GM12878 (cell line): ENCODE measurements at regions of chr14 and their contacts with region 1.

Region 1: DNA sequence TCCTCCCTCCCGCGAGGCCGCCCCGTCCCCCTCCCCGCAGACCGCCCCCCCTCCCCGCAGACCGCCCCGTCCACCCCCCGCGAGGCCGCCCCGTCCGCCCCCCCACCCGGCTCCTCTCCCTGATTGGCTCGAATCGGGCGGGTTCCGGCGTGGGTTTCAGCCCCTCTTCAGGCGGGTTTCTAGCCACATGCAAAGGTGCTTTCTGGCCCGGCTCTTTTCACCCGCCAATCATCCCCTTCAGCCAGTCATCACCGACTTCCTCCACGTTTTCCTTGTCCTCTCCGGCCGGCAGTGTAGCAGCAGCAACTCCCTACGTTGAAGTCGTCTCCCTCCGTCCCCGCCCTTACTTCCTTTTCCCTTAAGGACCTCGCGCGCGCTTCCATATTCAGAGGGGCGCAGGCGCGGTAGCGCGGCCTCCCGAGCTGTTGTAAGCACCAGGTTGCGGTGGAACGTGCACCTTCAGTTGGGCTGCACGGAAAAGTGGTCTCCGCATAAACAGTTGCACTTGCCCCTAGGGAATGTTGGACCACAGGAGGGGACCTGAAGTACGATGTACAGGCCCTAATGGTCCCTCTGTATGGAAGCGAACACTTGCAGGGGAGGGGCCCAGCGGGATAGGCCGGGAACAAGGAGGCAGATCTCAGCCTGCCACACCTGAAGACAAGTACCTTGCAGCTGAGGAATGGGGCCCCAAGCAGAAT is 44.6 kb upstream of the ESR2 start:
- DNase-seq: peak; percentile 96
- ATAC-seq: peak; percentile 91
- H3K4me3 ChIP-seq: peak overlapping the region; percentile 90
- H3K27ac ChIP-seq: peak overlapping the region; percentile 80
- H3K4me1 ChIP-seq: peaks cover 11% of the 10 kb centered on the region
- H3K27me3 ChIP-seq: no peaks in the 10 kb centered on the region
- CTCF ChIP-seq: no peak
- EP300 ChIP-seq: no peak
- POLR2A ChIP-seq: peak; percentile 78
- RAD21 ChIP-seq: no peak

Region 2: DNA sequence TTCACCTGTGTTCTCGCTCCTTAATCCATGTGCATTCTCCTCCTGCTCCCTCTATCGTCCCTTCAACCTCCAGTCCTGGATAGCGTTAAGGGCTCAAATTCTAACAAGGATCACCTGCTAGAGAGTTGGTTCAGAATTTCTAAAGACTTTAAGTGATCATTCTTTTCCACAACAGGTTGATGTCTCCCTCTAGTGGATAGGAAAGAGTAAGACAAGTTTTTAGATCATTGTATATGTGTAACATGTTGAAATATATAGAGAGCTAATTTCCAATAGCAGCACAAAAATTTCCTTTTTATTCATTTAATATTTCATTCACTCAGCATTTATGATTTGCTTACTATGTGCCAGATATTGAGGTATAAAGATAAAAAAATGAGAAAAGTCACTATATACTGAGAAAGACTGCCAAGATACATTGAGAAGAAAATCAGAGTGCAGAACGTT is 35.3 kb before region 1 on chr14:
- CTCF ChIA-PET with region 1: interaction called, 11 read pairs
- POLR2A ChIA-PET with region 1: no interaction called
- RAD21 ChIA-PET with region 1: interaction called, 7 read pairs
- SMC1A ChIA-PET with region 1: interaction called, 10 read pairs
- in situ Hi-C with region 1: no loop called
- intact Hi-C with region 1: no loop called
- DNase-seq: peak; percentile 28
- ATAC-seq: peak; percentile 93
- H3K4me3 ChIP-seq: no peak overlapping the region
- H3K27ac ChIP-seq: no peak overlapping the region
- H3K4me1 ChIP-seq: no peaks in the 10 kb centered on the region
- H3K27me3 ChIP-seq: no peaks in the 10 kb centered on the region
- CTCF ChIP-seq: peak; percentile 66 to 72 (median 67)
- EP300 ChIP-seq: no peak
- POLR2A ChIP-seq: no peak
- RAD21 ChIP-seq: peak; percentile 88

Region 3: DNA sequence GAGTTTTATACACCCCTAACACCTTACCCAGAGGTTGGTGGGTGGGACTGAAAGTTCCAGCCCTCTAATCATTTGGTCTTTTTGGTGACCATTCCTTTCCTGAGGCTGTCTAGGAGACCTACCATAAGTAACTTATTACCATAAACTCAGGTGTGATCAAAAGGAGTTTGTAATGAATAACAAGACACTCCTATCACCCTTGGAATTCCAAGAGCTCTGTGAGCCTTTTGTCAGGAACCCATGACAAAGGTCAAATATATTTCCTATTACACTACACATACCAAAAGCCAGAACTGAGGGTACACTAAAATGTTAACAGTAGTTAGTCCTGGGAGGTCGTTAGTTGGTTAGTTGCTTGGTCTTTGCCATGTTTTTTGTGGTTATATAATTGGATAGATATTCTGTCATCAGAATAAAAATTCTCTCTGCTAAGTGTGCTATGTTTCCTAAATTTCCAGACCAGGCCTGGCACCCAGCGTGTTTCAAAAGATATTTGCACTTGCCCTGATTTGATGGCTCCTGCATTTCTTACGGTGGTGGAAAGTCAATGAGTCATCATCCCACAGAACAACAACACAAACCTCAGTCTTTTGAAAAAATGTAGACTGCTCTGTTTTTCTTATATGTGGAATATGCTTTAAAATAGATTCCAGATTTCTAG is 99.5 kb after region 1 on chr14:
- CTCF ChIA-PET with region 1: interaction called, 66 read pairs
- POLR2A ChIA-PET with region 1: no interaction called
- RAD21 ChIA-PET with region 1: interaction called, 5 read pairs
- SMC1A ChIA-PET with region 1: interaction called, 6 read pairs
- in situ Hi-C with region 1: no loop called
- intact Hi-C with region 1: no loop called
- DNase-seq: no peak
- ATAC-seq: no peak
- H3K4me3 ChIP-seq: no peak overlapping the region
- H3K27ac ChIP-seq: no peak overlapping the region
- H3K4me1 ChIP-seq: no peaks in the 10 kb centered on the region
- H3K27me3 ChIP-seq: no peaks in the 10 kb centered on the region
- CTCF ChIP-seq: no peak
- EP300 ChIP-seq: no peak
- POLR2A ChIP-seq: no peak
- RAD21 ChIP-seq: no peak

Region 4: DNA sequence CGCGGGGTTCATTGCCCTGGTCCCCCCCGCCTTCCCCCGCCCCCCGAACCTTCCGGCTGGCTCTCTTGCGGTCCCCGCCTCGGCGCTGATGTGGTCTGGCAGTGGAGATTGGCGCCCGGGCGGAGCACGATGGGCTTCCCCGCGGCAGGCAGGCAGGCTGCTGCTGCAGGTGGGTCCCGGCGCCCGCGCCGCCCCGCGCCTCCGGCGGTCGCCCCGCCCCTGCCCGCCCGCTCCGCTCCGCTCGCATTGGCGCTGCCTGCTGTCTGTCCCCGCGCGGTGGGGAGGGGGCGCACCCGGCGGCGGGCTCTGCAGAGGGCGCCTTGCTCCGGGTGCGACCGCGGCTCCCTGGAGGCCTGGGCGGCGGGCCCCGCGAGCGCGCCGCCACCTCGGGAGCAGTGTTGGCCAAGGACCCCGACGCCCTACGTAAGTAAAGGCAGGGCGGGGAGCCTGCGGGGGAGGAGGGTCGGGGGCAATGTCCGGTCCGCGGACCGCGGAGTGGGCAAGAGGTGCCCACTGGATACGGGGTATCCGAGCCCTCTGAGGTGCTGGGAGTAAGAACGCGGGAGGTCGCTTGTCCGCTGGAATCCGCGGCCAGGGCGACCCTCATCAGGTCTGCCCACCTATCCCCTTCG is 126.5 kb after region 1 on chr14 and contains the start of gene AKAP5:
- CTCF ChIA-PET with region 1: interaction called, 25 read pairs
- POLR2A ChIA-PET with region 1: interaction called, 6 read pairs
- RAD21 ChIA-PET with region 1: interaction called, 7 read pairs
- SMC1A ChIA-PET with region 1: interaction called, 19 read pairs
- in situ Hi-C with region 1: no loop called
- intact Hi-C with region 1: no loop called
- DNase-seq: no peak
- ATAC-seq: peak; percentile 89
- H3K4me3 ChIP-seq: peak within 1 kb of the TSS; percentile 79
- H3K27ac ChIP-seq: peak within 1 kb of the TSS; percentile 29; the same call in 1 of the 2 replicates
- H3K4me1 ChIP-seq: peaks cover 33% of the 10 kb centered on the region
- H3K27me3 ChIP-seq: no peaks in the 10 kb centered on the region
- CTCF ChIP-seq: 0 out of 6 replicates have a peak, but pooled peaks of 1 of the 3 experiments have one; percentile 4
- EP300 ChIP-seq: no peak
- POLR2A ChIP-seq: peak; percentile 75
- RAD21 ChIP-seq: no peak
- polyA plus RNA-seq, gene AKAP5: 0.45 to 1.5 TPM

Region 5: DNA sequence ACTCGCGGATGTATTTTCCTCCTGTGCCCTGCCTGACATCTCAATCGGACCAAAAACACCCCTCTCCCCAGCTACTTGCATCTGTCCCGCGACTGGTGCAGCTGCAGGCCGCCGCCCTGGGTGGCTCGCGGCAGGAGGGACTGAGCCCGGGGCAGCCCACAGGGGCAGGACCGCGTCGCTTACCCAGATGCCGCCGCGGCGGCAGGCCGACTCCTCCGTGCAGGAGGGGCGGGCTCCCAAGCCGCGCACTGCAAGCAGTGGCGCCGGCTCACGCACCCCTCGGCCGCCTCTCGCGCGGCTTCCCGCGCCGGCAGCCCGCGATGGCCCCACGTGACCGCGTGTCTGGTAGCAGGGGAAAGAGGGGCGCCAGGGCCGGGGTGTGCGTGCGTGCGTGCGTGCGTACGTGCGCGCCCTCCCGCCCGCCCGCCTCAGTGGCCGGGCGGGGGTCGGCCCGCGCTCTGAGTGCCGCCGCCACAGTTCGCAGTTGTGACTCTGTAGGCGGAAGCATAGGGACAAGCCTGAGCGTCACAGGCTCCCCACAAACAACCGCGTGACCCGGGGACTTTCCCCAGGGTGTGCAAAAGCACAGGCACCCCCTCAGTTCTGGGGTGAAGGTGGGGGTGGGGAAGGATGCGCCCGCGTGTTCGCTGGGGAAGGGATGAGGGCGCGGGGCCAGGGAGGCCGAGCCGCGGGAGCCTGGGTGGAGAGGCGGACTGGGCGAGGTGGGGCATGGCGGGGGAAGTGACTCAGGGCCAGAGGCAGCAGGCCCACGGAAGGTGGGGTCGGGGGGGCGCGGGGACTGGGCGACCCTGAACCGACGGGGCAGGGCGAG is 164.9 kb after region 1 on chr14 and contains the start of gene ZBTB25:
- CTCF ChIA-PET with region 1: interaction called, 45 read pairs
- POLR2A ChIA-PET with region 1: interaction called, 6 read pairs
- RAD21 ChIA-PET with region 1: interaction called, 4 read pairs
- SMC1A ChIA-PET with region 1: interaction called, 31 read pairs
- in situ Hi-C with region 1: no loop called
- intact Hi-C with region 1: loop called (anchors 5 kb)
- DNase-seq: peak; percentile 83
- ATAC-seq: peak; percentile 71
- H3K4me3 ChIP-seq: peak within 1 kb of the TSS; percentile 91
- H3K27ac ChIP-seq: peak within 1 kb of the TSS; percentile 98
- H3K4me1 ChIP-seq: peaks cover 6% of the 10 kb centered on the region
- H3K27me3 ChIP-seq: no peaks in the 10 kb centered on the region
- CTCF ChIP-seq: no peak
- EP300 ChIP-seq: peak; percentile 82 to 86
- POLR2A ChIP-seq: peak; percentile 85
- RAD21 ChIP-seq: no peak
- polyA plus RNA-seq, gene ZBTB25: 4.1 to 5.6 TPM

Region 6: GRCh38 chr14:64540208-64541157 is 201.7 kb after region 1 on chr14 and contains the start of gene HSPA2:
- CTCF ChIA-PET with region 1: interaction called, 3 read pairs
- POLR2A ChIA-PET with region 1: no interaction called
- RAD21 ChIA-PET with region 1: no interaction called
- SMC1A ChIA-PET with region 1: no interaction called
- in situ Hi-C with region 1: no loop called
- intact Hi-C with region 1: loop called (anchors 1 kb)
- DNase-seq: peak; percentile 89
- ATAC-seq: peak; percentile 98
- H3K4me3 ChIP-seq: peak within 1 kb of the TSS; percentile 85
- H3K27ac ChIP-seq: peak within 1 kb of the TSS; percentile 8; the same call in 1 of the 2 replicates
- H3K4me1 ChIP-seq: peaks cover 4% of the 10 kb centered on the region; the same call in 1 of the 2 replicates
- H3K27me3 ChIP-seq: peaks cover 6 to 9% of the 10 kb centered on the region in 2 experiments
- CTCF ChIP-seq: peak; percentile 69 to 84 (median 77)
- EP300 ChIP-seq: no peak
- POLR2A ChIP-seq: peak; percentile 90
- RAD21 ChIP-seq: 0 out of 2 replicates have a peak, but pooled peaks have one; percentile 32
- polyA plus RNA-seq, gene HSPA2: 0.02 to 0.03 TPM

Region 7: GRCh38 chr14:64764641-64765520 is 426.1 kb after region 1 on chr14:
- CTCF ChIA-PET with region 1: interaction called, 5 read pairs
- POLR2A ChIA-PET with region 1: no interaction called
- RAD21 ChIA-PET with region 1: no interaction called
- SMC1A ChIA-PET with region 1: interaction called, 3 read pairs
- in situ Hi-C with region 1: loop called (anchors 10 kb)
- intact Hi-C with region 1: loop called (anchors 10 kb)
- DNase-seq: no peak
- ATAC-seq: peak; percentile 81
- H3K4me3 ChIP-seq: no peak overlapping the region
- H3K27ac ChIP-seq: no peak overlapping the region
- H3K4me1 ChIP-seq: no peaks in the 10 kb centered on the region
- H3K27me3 ChIP-seq: no peaks in the 10 kb centered on the region; a peak in 1 of 4 replicates
- CTCF ChIP-seq: peak; percentile 81 to 96 (median 85)
- EP300 ChIP-seq: no peak
- POLR2A ChIP-seq: no peak
- RAD21 ChIP-seq: peak; percentile 61